GM10248 (cell line): ENCODE measurements at regions of chr7 and their contacts with region 1.

Region 1: DNA sequence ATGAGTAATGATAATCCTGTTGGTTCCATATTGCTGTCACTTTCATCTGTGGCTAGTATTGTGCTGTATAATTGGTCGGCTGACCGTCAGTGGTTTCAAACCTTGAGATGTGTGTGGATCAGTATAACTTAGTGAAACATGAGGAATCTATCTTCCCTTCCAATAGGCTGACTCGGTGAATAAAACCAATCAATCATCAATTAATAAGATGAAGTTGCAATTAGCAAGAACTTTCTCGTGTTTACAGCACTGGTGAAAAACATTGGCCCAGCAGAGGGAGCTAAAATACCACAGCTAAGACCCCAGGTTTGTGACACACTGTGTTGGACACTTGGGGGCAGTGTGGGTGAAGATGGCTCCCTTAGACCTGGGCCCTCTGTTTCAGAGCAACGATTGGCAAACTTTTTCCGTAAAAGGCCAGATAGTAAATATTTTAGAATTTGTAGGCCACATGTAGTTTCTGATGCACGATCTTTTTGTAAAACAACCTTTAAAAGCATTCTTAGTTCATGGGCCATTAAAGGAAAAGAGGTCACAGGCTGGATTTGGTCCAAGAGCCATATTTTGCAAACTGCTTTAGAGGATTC is 47.8 kb downstream of the STRA8 start:
- DNase-seq: peak; percentile 80
- CTCF ChIP-seq: peak; percentile 98

Region 2: GRCh38 chr7:134327896-134328295 is 953.6 kb before region 1 on chr7:
- CTCF ChIA-PET with region 1: no interaction called
- POLR2A ChIA-PET with region 1: no interaction called
- DNase-seq: peak; percentile 49
- CTCF ChIP-seq: peak; percentile 53

Region 3: GRCh38 chr7:135170274-135170997 is 111.0 kb before region 1 on chr7 and contains the start of gene CYREN:
- CTCF ChIA-PET with region 1: no interaction called
- POLR2A ChIA-PET with region 1: no interaction called
- DNase-seq: peak; percentile 90
- CTCF ChIP-seq: peak; percentile 86

Region 4: DNA sequence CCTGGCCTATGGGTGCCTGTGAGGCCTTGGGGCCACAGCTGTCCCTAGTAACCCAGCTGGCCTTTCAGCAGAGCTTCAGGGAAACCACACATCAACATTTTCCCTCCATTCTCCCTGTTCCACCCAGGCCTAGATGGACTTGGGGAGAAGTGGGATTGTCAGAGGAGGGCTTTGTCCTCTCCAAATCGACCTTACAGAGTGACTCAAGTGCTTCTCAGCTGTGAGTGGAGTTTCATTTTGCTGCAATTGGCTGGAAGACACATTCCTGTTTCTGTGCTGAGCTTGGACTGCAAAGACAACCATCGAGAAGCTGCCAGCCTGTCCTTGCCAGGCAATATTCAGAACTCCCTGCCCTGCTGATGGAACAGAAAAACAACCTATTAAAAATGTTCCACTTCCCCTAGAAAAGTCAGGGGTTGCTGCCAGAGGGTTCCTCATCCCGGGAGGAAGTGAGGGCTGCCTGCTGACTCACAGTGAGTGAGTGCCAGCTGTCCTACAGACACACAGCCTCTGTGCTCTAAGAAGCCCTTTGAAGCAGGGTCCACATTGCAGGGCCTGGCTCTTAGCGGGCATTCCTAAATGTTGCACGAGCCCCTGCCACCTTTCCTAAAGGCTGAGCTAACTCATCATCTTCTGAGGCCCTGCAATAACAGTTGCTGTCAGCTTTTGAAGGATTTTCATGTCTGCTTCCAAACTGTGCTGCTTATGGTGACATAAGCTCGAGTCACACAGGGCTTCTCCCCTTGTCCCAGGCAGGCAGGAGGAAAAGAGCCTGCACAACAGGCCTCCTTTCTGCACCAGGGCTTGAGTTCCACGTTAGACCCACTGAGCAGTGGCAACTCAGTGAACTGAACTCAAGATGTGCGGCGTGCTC is 27.3 kb before region 1 on chr7:
- CTCF ChIA-PET with region 1: interaction called, 11 read pairs
- POLR2A ChIA-PET with region 1: no interaction called
- DNase-seq: no peak
- CTCF ChIP-seq: no peak

Region 5: GRCh38 chr7:135291809-135292253 is 10.4 kb after region 1 on chr7:
- CTCF ChIA-PET with region 1: interaction called, 21 read pairs
- POLR2A ChIA-PET with region 1: no interaction called
- DNase-seq: no peak
- CTCF ChIP-seq: no peak

Region 6: DNA sequence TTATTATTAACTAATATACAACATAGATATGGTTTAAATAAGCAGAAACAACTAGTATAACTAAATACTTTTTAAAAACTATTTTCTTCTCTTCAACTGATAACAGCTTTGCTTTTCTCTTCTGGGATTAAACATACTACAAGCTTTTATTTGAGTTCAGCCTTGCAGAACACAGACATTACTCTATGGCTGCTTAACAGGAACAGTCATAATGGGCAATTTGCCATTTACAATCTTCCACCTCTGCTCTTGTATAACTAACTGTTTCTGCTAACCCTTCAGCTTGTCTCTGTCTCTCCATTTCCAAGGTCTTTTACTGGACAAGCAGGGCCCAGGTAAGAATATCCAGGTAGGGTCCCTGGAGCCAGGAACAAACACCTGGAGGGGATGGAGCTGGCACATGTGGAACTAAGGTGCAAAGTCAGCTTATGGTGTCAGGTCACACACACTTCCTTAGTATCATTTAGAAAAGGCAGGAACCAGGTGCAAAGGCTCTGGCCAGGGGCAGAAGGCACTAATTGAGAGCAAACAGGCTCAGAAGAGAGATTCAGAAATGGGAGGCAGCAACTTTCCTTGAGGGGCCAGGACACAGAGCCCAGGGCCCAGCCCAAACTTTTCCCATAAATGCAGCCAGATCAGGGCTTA is 45.3 kb after region 1 on chr7:
- CTCF ChIA-PET with region 1: interaction called, 17 read pairs
- POLR2A ChIA-PET with region 1: no interaction called
- DNase-seq: no peak
- CTCF ChIP-seq: no peak

Region 7: GRCh38 chr7:135645296-135645904 is 363.9 kb after region 1 on chr7:
- CTCF ChIA-PET with region 1: interaction called, 66 read pairs
- POLR2A ChIA-PET with region 1: no interaction called
- DNase-seq: no peak
- CTCF ChIP-seq: peak; percentile 64

Region 8: GRCh38 chr7:135855846-135856245 is 574.4 kb after region 1 on chr7:
- CTCF ChIA-PET with region 1: no interaction called
- POLR2A ChIA-PET with region 1: no interaction called
- DNase-seq: no peak
- CTCF ChIP-seq: no peak